Heart left ventricle (tissue), 16 donors: ENCODE measurements at regions of chr9 and their contacts with region 1.

Region 1: DNA sequence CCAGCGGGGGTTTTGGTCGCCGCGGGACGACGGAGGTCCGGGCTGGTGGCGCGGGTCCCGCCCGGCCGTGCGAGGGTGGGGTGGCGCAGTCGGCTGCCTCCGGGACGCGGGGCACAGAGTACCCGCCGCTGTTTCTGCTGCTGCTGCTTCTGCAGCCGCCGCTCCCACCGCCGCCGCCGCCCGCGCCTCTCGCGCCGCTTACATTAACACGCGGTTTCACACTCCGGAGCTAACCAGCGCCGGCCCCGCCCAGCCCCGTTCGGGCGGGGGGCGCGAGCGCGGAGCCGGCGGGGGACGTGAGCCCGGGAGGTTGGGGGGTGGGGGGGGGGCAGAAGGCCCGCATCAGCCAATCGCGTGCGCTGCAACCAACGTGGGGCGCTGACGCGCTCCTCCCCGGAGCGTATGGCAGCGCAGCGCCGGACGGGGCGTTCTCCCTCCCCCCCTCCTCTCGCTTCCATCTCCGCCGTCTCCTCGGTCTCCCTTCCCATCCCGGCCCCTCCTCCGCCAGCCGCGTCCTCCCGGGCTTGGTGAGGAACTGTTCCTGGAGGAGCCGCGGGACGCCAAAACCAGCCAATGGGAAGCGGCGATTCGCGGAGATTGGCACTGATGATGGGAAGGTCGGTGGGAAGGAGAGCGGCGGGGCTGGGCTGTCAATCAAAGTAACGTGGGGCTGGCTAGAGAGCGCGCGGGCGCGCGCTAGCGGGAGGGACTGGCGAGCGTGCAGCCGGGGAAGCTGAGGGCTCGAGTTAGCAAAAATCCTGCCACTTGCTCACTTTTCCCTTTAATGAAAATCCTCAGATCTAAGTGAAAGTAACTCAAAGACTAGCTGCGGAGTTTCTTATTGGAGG is at the start of gene TLE1:
- DNase-seq: peak; percentile 99 to 100 (median 100)
- ATAC-seq: peak; percentile 97 to 99 (median 98)
- H3K4me3 ChIP-seq: peak within 1 kb of the TSS; percentile 62 to 80 (median 70)
- H3K27ac ChIP-seq: peak within 1 kb of the TSS; percentile 73 to 91 (median 81)
- H3K4me1 ChIP-seq: peaks cover 0 to 42% (median 14%) of the 10 kb centered on the region in 12 donors
- H3K27me3 ChIP-seq: peaks cover 0 to 7% (median 0%) of the 10 kb centered on the region in 9 donors
- CTCF ChIP-seq: peak in 1 of 12 donors; percentile 18
- POLR2A ChIP-seq: peak; percentile 37 to 92
- total RNA-seq, gene TLE1: 6.2 to 25.4 (median 12.0) TPM

Region 2: DNA sequence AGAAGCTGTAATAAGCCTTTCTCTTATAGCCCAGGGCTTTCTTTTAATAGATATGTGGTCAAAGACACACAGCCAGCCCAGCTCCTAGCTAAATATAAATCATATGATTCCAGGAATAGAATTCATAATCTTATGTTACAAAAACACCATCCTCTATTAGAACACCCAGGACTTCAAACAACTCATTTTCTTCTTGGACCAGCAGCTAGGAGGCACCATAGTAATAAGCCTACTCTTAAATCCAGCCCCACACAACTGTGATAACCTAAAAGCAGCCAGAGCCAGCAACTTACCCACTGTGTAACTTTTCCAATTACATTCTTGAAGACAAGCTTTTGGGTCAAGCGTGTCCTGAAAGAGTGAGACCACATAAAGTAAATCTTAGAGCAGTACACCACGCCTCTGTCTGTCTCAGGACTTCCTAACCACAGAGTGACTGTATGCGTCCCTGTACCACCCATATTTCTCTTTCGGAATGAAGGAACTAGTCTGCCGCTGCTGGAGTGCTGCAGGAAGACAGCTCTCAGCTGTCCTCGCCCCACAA is 224.0 kb before region 1 on chr9:
- intact Hi-C with region 1: loop called in 1 of 10 experiments (anchors 5 kb)
- DNase-seq: peak in 1 of 5 donors; percentile 17
- ATAC-seq: peak; percentile 77 to 90 (median 90)
- H3K4me3 ChIP-seq: no peak overlapping the region
- H3K27ac ChIP-seq: peak overlapping the region in 1 of 12 donors; percentile 26
- H3K4me1 ChIP-seq: peaks cover 0 to 10% (median 0%) of the 10 kb centered on the region in 12 donors
- H3K27me3 ChIP-seq: no peaks in the 10 kb centered on the region
- CTCF ChIP-seq: peak in 6 of 12 donors; percentile 9 to 44 (median 26)
- POLR2A ChIP-seq: no peak

Region 3: DNA sequence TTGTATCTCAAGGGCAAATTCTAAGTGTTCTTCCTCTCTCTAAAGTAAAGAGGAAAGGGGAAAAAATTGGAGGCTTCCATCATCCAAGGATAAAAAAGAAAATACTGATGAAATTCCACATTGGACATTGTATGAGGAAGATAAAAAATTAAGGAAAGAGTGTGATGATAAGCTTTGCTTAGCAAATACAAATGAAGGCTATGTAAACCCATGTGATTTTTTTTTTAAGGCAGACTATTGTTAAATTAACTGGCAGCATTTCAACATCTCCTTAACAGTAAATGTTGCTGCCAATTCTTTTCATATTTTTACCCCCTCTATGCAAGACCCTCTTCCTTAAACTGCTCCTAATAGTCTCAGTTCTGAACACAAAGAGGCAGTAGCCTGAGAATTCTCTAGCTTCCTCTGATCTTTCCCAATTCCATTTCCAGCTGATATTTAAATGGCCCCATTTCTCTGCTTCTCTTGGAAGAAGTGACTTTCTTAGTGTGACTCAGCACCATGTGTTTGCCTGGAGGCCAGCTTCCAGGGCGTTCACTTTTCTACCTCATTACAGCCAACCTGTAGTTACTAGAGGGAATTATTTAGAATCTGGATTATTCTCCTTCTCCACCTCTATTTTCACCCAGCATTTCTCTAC is 159.9 kb before region 1 on chr9:
- intact Hi-C with region 1: loop called in 6 of 10 experiments (anchors 2 to 10 kb)
- DNase-seq: no peak
- ATAC-seq: peak in 3 of 4 donors; percentile 72 to 81 (median 80)
- H3K4me3 ChIP-seq: no peak overlapping the region
- H3K27ac ChIP-seq: no peak overlapping the region
- H3K4me1 ChIP-seq: peaks cover 0 to 17% (median 0%) of the 10 kb centered on the region in 12 donors
- H3K27me3 ChIP-seq: no peaks in the 10 kb centered on the region
- CTCF ChIP-seq: no peak
- POLR2A ChIP-seq: no peak

Region 4: GRCh38 chr9:81595887-81596543 is 93.6 kb before region 1 on chr9:
- intact Hi-C with region 1: loop called in 4 of 10 experiments (anchors 5 kb)
- DNase-seq: no peak
- ATAC-seq: peak in 1 of 4 donors; percentile 47
- H3K4me3 ChIP-seq: no peak overlapping the region
- H3K27ac ChIP-seq: no peak overlapping the region
- H3K4me1 ChIP-seq: peaks cover 0 to 59% (median 22%) of the 10 kb centered on the region in 12 donors
- H3K27me3 ChIP-seq: no peaks in the 10 kb centered on the region
- CTCF ChIP-seq: no peak
- POLR2A ChIP-seq: no peak

Region 5: DNA sequence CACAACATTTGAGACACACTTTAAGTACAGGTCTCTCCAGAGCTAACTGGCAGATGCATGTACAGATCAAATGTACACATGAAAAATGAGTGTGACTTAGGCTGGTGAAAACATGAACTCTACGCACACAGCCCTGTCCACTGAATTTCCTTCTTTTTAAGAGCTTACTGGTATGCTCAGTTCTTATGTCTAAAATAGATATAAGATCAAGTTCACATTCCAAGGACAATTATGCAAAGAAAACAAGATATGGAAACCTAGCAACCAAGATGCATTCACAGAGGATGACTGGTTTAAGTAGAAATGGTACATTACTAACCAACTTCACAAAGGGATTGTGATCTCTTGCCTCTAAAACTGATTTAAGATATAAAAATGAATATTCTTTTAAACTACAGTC is 57.0 kb before region 1 on chr9:
- intact Hi-C with region 1: no loop called
- DNase-seq: no peak
- ATAC-seq: no peak
- H3K4me3 ChIP-seq: no peak overlapping the region
- H3K27ac ChIP-seq: no peak overlapping the region
- H3K4me1 ChIP-seq: peaks cover 0 to 5% (median 0%) of the 10 kb centered on the region in 12 donors
- H3K27me3 ChIP-seq: no peaks in the 10 kb centered on the region
- CTCF ChIP-seq: no peak
- POLR2A ChIP-seq: no peak

Region 6: GRCh38 chr9:81671880-81672280 is 17.7 kb before region 1 on chr9:
- intact Hi-C with region 1: no loop called
- DNase-seq: peak; percentile 83 to 91 (median 89)
- ATAC-seq: peak; percentile 95 to 99 (median 98)
- H3K4me3 ChIP-seq: no peak overlapping the region
- H3K27ac ChIP-seq: peak overlapping the region in 4 of 12 donors; percentile 1 to 44 (median 24)
- H3K4me1 ChIP-seq: peaks cover 0 to 44% (median 24%) of the 10 kb centered on the region in 12 donors
- H3K27me3 ChIP-seq: no peaks in the 10 kb centered on the region
- CTCF ChIP-seq: no peak
- POLR2A ChIP-seq: no peak

Region 7: DNA sequence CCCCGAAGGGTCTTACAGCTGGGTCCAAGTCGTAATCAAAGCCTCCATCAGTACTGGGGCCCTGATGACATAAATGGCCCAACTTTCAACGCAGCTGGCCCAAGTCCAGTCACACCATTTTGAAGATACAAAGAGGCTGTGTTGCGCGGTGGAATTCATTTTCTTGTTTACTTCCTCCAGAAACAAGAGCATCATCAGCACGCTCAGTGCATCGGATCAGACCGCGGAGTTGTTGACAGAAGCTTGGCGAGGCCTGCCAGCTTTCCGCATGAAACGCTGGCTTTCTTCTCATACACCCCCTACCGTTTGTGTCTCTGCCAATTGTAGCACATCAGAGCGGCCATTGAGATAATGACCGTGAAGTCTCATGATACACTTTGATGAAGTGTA is 136.9 kb after region 1 on chr9:
- intact Hi-C with region 1: loop called in 3 of 10 experiments (anchors 10 kb)
- DNase-seq: peak; percentile 58 to 85 (median 76)
- ATAC-seq: peak; percentile 89 to 96 (median 92)
- H3K4me3 ChIP-seq: no peak overlapping the region
- H3K27ac ChIP-seq: no peak overlapping the region
- H3K4me1 ChIP-seq: peaks cover 0 to 21% (median 4%) of the 10 kb centered on the region in 12 donors
- H3K27me3 ChIP-seq: peaks cover 0 to 33% (median 2%) of the 10 kb centered on the region in 9 donors
- CTCF ChIP-seq: peak in 4 of 12 donors; percentile 8 to 30 (median 22)
- POLR2A ChIP-seq: no peak

Region 8: GRCh38 chr9:81894891-81895290 is 205.3 kb after region 1 on chr9:
- intact Hi-C with region 1: no loop called
- DNase-seq: no peak
- ATAC-seq: no peak
- H3K4me3 ChIP-seq: no peak overlapping the region
- H3K27ac ChIP-seq: no peak overlapping the region
- H3K4me1 ChIP-seq: no peaks in the 10 kb centered on the region
- H3K27me3 ChIP-seq: no peaks in the 10 kb centered on the region
- CTCF ChIP-seq: no peak
- POLR2A ChIP-seq: no peak

Region 9: GRCh38 chr9:82057805-82058204 is 368.2 kb after region 1 on chr9:
- intact Hi-C with region 1: no loop called
- DNase-seq: no peak
- ATAC-seq: no peak
- H3K4me3 ChIP-seq: no peak overlapping the region
- H3K27ac ChIP-seq: no peak overlapping the region
- H3K4me1 ChIP-seq: no peaks in the 10 kb centered on the region
- H3K27me3 ChIP-seq: no peaks in the 10 kb centered on the region
- CTCF ChIP-seq: no peak
- POLR2A ChIP-seq: no peak

Region 10: GRCh38 chr9:82488313-82489200 is 799.0 kb after region 1 on chr9:
- intact Hi-C with region 1: loop called in 2 of 10 experiments (anchors 10 kb)
- DNase-seq: peak in 3 of 5 donors; percentile 41 to 57 (median 55)
- ATAC-seq: peak; percentile 79 to 92 (median 86)
- H3K4me3 ChIP-seq: peak overlapping the region in 1 of 12 donors; percentile 1
- H3K27ac ChIP-seq: peak overlapping the region; percentile 64 to 86 (median 76)
- H3K4me1 ChIP-seq: peaks cover 0 to 31% (median 16%) of the 10 kb centered on the region in 12 donors
- H3K27me3 ChIP-seq: no peaks in the 10 kb centered on the region
- CTCF ChIP-seq: no peak
- POLR2A ChIP-seq: no peak